ENCODE measurements at regions of chr6 and their contacts with region 1.

Region 1: GRCh38 chr6:31493875-31494694 is 3.9 kb upstream of the MICB start:
- DNase-seq: peak in 1 of 2 donors; percentile 88
- H3K4me3 ChIP-seq: peak overlapping the region; percentile 72 to 80
- H3K27ac ChIP-seq: peak overlapping the region; percentile 67 to 79
- H3K4me1 ChIP-seq: peaks cover 0 to 5% of the 10 kb centered on the region in 2 donors
- H3K27me3 ChIP-seq: no peaks in the 10 kb centered on the region
- CTCF ChIP-seq: peak; percentile 64 to 79 (median 78)

Region 2: DNA sequence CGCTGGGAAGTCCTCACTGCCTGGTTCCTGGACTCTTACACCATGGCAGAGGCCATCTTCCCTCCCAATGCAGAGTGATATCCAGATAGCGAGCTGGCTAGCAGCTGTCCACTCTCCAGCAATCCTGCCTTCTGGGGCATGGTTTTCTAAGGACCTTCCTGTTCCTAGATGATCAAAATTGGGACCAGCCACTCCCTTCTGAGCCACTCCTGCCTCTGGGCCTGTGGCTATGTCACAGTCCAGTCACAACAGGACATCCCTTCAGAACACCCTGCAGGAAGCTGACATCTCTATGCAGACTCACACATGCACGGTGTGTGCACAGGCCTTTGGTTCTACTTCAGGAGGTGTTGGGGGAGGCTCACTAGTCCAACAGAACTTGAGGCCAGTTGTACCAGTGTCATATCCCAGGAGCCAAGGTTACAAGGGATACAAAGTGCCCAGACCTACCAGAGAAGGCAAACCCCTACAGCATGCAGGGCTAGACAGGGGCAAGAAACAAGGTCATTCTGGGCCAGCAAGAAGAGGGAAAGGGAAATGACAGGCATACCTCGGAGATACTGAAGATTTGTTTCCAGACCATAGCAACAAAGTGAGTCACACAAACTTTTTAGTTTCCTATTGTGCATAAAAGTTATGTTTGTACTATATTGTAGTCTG is 32.0 kb after region 1 on chr6:
- intact Hi-C with region 1: loop called (anchors 5 kb)
- DNase-seq: peak in 1 of 2 donors; percentile 48
- H3K4me3 ChIP-seq: no peak overlapping the region
- H3K27ac ChIP-seq: no peak overlapping the region
- H3K4me1 ChIP-seq: no peaks in the 10 kb centered on the region
- H3K27me3 ChIP-seq: no peaks in the 10 kb centered on the region
- CTCF ChIP-seq: no peak

Region 3: GRCh38 chr6:31597006-31597405 is 102.9 kb after region 1 on chr6:
- intact Hi-C with region 1: loop called (anchors 2 kb)
- DNase-seq: no peak
- H3K4me3 ChIP-seq: no peak overlapping the region
- H3K27ac ChIP-seq: no peak overlapping the region
- H3K4me1 ChIP-seq: no peaks in the 10 kb centered on the region
- H3K27me3 ChIP-seq: no peaks in the 10 kb centered on the region
- CTCF ChIP-seq: peak in 1 of 3 experiments; percentile 21

Measured in ascending aorta (tissue), 2 donors.